B cell (primary cell): ENCODE measurements at regions of chr17 and their contacts with region 1.

Region 1: GRCh38 chr17:57284984-57285646 is 28.8 kb downstream of the MSI2 start:
- DNase-seq: peak; percentile 76
- ATAC-seq: peak; percentile 83
- H3K4me3 ChIP-seq: peak overlapping the region in 3 of 5 experiments; percentile 38 to 43 (median 40)
- H3K4me3 Mint-ChIP-seq: peak overlapping the region; percentile 83
- H3K27ac ChIP-seq: peak overlapping the region in 1 of 2 donors; percentile 44
- H3K27ac Mint-ChIP-seq: peak overlapping the region; percentile 74
- H3K4me1 ChIP-seq: peaks cover 14 to 24% of the 10 kb centered on the region in 2 donors
- H3K4me1 Mint-ChIP-seq: peaks cover 51% of the 10 kb centered on the region
- H3K27me3 ChIP-seq: no peaks in the 10 kb centered on the region
- H3K27me3 Mint-ChIP-seq: no peaks in the 10 kb centered on the region
- CTCF ChIP-seq: no peak

Region 2: GRCh38 chr17:57135789-57136291 is 149.3 kb before region 1 on chr17:
- CTCF ChIA-PET with region 1: no interaction called
- POLR2A ChIA-PET with region 1: no interaction called
- intact Hi-C with region 1: no loop called
- DNase-seq: peak; percentile 31
- ATAC-seq: no peak
- H3K4me3 ChIP-seq: no peak overlapping the region
- H3K4me3 Mint-ChIP-seq: no peak overlapping the region
- H3K27ac ChIP-seq: no peak overlapping the region
- H3K27ac Mint-ChIP-seq: no peak overlapping the region
- H3K4me1 ChIP-seq: peaks cover 13 to 21% of the 10 kb centered on the region in 2 donors
- H3K4me1 Mint-ChIP-seq: peaks cover 15% of the 10 kb centered on the region
- H3K27me3 ChIP-seq: peaks cover 0 to 3% (median 0%) of the 10 kb centered on the region in 4 experiments
- H3K27me3 Mint-ChIP-seq: peaks cover 24% of the 10 kb centered on the region
- CTCF ChIP-seq: no peak

Region 3: GRCh38 chr17:57261084-57261461 is 24.0 kb before region 1 on chr17:
- CTCF ChIA-PET with region 1: interaction called, 3 read pairs
- POLR2A ChIA-PET with region 1: interaction called, 3 read pairs
- intact Hi-C with region 1: loop called (anchors 2 kb)
- DNase-seq: peak; percentile 23
- ATAC-seq: no peak
- H3K4me3 ChIP-seq: no peak overlapping the region
- H3K4me3 Mint-ChIP-seq: peak overlapping the region; percentile 84
- H3K27ac ChIP-seq: no peak overlapping the region
- H3K27ac Mint-ChIP-seq: peak overlapping the region; percentile 73
- H3K4me1 ChIP-seq: peaks cover 38 to 49% of the 10 kb centered on the region in 2 donors
- H3K4me1 Mint-ChIP-seq: peaks cover 58% of the 10 kb centered on the region
- H3K27me3 ChIP-seq: no peaks in the 10 kb centered on the region
- H3K27me3 Mint-ChIP-seq: no peaks in the 10 kb centered on the region
- CTCF ChIP-seq: no peak